ENCODE measurements at regions of chr20 and their contacts with region 1.

Region 1: DNA sequence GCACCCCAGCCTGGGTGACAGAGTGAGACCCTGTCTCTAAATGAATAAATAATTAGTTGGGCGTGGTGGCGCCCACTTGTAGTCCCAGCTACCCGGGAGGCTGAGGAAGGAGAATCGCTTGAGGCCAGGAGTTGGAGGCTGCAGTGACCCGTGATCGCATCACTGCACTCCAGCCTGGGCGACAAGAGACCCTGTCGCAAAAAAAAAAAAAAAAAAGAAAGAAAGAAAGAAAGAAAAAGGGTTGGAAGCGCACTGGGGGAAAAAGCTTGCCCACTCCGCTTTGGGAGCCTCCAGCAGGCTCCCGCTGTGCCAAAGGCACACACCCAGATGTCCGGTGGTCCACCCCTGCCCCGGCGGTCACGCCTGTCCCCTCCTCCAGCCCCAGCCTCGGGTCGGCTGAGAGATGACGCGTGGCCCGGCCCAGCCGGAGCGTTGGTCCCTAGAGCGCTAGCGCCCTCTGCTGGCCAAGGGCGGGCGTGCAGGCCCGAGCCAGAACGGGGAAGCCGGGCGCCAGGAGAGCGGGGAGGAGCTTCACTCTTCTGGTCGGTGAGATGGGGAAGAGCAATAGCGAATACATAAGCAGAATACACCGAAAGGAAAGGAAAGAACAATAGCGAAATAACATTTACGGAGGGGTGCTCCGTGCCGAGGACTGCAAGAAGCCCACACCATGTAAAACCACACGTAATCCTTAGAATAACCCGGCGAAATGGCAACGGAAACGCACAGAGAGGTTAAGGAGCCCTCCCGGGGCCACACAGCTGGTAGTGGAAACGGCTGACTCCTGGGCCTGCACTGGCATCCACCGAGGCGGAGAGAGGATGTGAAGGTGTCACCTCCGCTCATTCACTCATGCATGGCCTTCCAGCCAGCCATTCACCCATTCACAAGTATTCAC is 41.7 kb downstream of the UBE2V1 start:
- DNase-seq: peak; percentile 82
- H3K4me3 Mint-ChIP-seq: peak overlapping the region; percentile 50
- H3K27ac Mint-ChIP-seq: no peak overlapping the region
- H3K4me1 Mint-ChIP-seq: peaks cover 6% of the 10 kb centered on the region
- H3K27me3 Mint-ChIP-seq: no peaks in the 10 kb centered on the region
- CTCF ChIP-seq: peak; percentile 98

Region 2: GRCh38 chr20:49936153-49937027 is 134.8 kb before region 1 on chr20 and contains the start of gene RNF114:
- CTCF ChIA-PET with region 1: interaction called, 23 read pairs
- POLR2A ChIA-PET with region 1: interaction called, 6 read pairs
- intact Hi-C with region 1: no loop called
- DNase-seq: peak; percentile 90
- H3K4me3 Mint-ChIP-seq: peak within 1 kb of the TSS; percentile 85
- H3K27ac Mint-ChIP-seq: peak within 1 kb of the TSS; percentile 69
- H3K4me1 Mint-ChIP-seq: peaks cover 23% of the 10 kb centered on the region
- H3K27me3 Mint-ChIP-seq: no peaks in the 10 kb centered on the region
- CTCF ChIP-seq: no peak
- total RNA-seq, gene RNF114: 40.0 and 48.6 TPM in 2 replicates

Region 3: DNA sequence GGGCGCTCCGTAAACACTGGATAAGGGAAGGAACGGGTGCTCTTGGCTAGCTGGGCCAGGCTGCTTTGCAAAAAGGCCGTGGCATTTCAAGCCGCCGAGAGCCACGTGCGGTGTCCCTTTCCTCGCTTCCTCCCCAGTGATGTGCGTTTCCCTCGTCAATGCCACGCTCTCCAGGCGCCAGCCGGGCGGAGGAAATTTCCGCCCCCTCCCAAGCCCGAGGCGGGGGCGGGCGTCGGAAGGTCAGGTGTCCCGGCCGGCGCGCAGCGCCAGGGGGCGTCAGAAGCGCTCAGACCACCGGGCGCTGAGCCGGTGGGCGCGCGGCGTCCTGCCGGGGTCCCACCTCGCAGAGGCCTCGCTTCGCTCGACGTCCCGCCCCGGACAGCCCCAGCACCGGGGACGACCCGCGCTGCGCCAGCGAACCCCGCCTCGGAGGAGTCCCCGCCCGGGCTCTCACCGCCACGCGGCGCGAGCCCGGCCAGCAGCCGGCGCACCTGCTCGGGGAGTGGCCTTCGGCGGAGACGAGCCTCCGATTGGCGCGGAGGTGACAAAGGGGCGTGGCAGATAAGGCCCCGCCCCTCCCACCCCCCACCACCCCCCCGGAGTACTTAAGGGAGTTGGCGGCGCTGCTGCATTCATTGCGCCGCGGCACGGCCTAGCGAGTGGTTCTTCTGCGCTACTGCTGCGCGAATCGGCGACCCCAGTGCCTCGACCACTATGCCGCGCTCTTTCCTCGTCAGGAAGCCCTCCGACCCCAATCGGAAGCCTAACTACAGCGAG is 88.7 kb before region 1 on chr20 and contains the start of gene SNAI1:
- CTCF ChIA-PET with region 1: interaction called, 582 read pairs
- POLR2A ChIA-PET with region 1: interaction called, 33 read pairs
- intact Hi-C with region 1: loop called (anchors 1 kb)
- DNase-seq: peak; percentile 86
- H3K4me3 Mint-ChIP-seq: peak within 1 kb of the TSS; percentile 55
- H3K27ac Mint-ChIP-seq: peak within 1 kb of the TSS; percentile 75
- H3K4me1 Mint-ChIP-seq: peaks cover 6% of the 10 kb centered on the region
- H3K27me3 Mint-ChIP-seq: peaks cover 19% of the 10 kb centered on the region
- CTCF ChIP-seq: peak; percentile 65
- total RNA-seq, gene SNAI1: 0.17 and 0.23 TPM in 2 replicates

Region 4: DNA sequence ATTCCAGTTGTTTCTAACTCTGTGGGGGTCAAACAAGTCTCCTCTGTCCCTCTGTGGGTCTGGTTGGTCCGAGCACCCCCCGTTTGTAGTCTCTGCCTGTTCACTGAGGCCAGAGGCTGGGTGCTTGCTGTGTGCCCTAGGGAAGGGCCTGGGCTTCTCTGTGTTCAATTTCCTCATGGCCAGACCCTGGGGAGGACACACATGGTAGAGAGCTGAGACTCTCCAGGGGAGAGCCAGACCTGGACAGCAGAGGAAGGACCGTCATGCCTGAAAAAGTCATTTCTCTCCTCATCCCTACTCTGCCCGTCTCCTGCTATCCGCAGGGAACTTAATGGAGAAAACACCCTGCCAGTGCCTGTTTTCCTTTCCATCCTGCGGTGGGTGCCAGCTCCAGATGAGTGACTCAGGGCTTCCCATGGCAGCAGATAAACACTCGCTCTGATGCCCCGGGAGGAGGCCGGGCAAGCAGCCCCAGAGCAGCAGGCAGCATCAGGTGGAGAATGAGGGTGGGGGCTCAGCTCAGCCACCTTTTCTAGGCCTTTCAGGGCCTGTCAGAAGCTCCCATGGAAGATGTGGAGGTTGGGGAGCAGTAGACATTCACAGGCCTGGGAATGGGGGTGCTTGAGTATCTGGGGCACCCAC is 36.6 kb before region 1 on chr20:
- CTCF ChIA-PET with region 1: interaction called, 31 read pairs
- POLR2A ChIA-PET with region 1: no interaction called
- intact Hi-C with region 1: no loop called
- DNase-seq: peak; percentile 88
- H3K4me3 Mint-ChIP-seq: no peak overlapping the region
- H3K27ac Mint-ChIP-seq: peak overlapping the region; percentile 81
- H3K4me1 Mint-ChIP-seq: peaks cover 30% of the 10 kb centered on the region
- H3K27me3 Mint-ChIP-seq: no peaks in the 10 kb centered on the region
- CTCF ChIP-seq: no peak

Region 5: DNA sequence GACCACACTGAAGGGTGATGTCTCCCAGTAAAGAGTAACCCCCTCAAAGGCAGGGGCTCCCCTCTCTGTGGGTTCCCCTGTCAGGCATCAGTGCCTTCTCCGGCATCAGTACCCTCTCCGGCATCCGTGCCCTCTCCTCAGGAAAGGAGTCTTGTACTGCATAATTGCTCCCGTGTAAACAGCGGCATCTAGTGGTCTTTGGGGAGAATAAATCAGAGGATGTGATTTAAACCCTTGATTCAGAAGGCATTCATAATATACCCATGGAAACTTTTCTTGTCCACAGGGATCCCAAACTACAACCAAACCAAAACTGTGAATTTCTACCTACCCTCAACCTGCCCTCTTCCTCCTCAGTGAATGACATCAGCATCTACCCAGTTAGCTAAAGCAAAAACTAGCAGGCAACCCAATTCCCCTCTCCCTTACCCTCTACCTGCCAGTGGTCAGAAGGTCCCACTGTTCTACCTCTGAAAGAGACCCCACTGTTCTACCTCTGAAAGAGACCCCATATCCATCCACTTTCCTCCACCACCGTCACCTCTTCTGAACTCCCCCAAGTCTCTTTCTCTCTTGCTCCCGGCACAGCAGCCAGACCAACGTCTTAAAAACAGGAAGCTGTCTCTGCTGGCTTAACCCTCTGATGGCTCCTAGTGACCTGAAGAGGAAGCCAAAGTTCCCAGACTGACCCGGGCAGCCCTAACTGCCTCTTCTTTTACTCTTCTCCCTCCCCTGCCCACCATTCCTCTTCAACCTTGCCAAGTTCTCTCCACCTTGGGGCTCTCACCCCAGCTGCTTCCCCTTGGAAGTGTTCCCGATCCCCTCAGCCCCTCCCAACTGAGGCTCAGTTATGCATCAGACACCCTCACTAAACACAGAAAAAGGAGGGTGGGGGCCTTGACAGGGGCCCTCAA is 14.5 kb after region 1 on chr20:
- CTCF ChIA-PET with region 1: interaction called, 143 read pairs
- POLR2A ChIA-PET with region 1: interaction called, 4 read pairs
- intact Hi-C with region 1: no loop called
- DNase-seq: peak; percentile 75
- H3K4me3 Mint-ChIP-seq: peak overlapping the region; percentile 8
- H3K27ac Mint-ChIP-seq: peak overlapping the region; percentile 77
- H3K4me1 Mint-ChIP-seq: peaks cover 33% of the 10 kb centered on the region
- H3K27me3 Mint-ChIP-seq: no peaks in the 10 kb centered on the region
- CTCF ChIP-seq: peak; percentile 60

Region 6: GRCh38 chr20:50165684-50166554 is 94.7 kb after region 1 on chr20:
- CTCF ChIA-PET with region 1: interaction called, 16 read pairs
- POLR2A ChIA-PET with region 1: interaction called, 4 read pairs
- intact Hi-C with region 1: loop called (anchors 1 kb)
- DNase-seq: peak; percentile 100
- H3K4me3 Mint-ChIP-seq: peak overlapping the region; percentile 72
- H3K27ac Mint-ChIP-seq: peak overlapping the region; percentile 98
- H3K4me1 Mint-ChIP-seq: peaks cover 18% of the 10 kb centered on the region
- H3K27me3 Mint-ChIP-seq: no peaks in the 10 kb centered on the region
- CTCF ChIP-seq: no peak

Measured in MCF 10A (cell line).